ENCODE measurements at regions of chr10 and their contacts with region 1.

Region 1: GRCh38 chr10:99620713-99621453 is 644 bp upstream of the SLC25A28 start:
- DNase-seq: peak; percentile 95 to 97
- H3K4me3 ChIP-seq: peak overlapping the region; percentile 70 to 93
- H3K27ac ChIP-seq: peak overlapping the region; percentile 92 to 98
- H3K4me1 ChIP-seq: peaks cover 0 to 45% (median 29%) of the 10 kb centered on the region in 4 donors
- H3K27me3 ChIP-seq: no peaks in the 10 kb centered on the region
- CTCF ChIP-seq: peak; percentile 12 to 22

Region 2: GRCh38 chr10:99430451-99431189 is 190.3 kb before region 1 on chr10 and contains the start of gene GOT1:
- intact Hi-C with region 1: loop called (anchors 2 kb)
- DNase-seq: peak; percentile 96 to 98
- H3K4me3 ChIP-seq: peak within 1 kb of the TSS; percentile 87 to 92
- H3K27ac ChIP-seq: peak within 1 kb of the TSS; percentile 85 to 90
- H3K4me1 ChIP-seq: peaks cover 0 to 25% (median 16%) of the 10 kb centered on the region in 4 donors
- H3K27me3 ChIP-seq: no peaks in the 10 kb centered on the region
- CTCF ChIP-seq: no peak

Region 3: DNA sequence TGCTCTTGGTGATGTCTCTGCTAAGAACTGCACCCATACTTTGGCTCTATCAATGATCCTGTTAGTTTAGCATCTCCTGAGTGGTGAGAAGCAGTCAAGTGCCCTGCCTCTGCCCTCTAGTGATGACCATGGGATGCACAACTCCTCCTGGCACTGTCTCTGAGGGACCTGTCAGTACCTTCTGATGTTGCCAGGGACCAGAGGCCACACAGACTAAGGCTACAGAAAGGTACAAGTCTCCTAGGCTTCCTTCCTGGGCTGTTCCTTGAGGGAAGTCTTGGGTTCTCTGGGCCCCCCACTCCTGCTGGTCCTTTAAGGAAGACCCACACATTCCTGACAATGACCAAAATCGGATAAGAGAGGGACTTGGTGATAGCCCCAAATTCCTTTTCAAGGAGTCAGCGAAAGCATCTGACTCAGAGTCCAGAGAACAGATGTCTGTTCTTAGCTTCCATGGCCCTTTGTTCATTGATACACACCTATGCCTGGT is 72.8 kb before region 1 on chr10:
- intact Hi-C with region 1: no loop called
- DNase-seq: no peak
- H3K4me3 ChIP-seq: no peak overlapping the region
- H3K27ac ChIP-seq: no peak overlapping the region
- H3K4me1 ChIP-seq: no peaks in the 10 kb centered on the region
- H3K27me3 ChIP-seq: peaks cover 0 to 50% of the 10 kb centered on the region in 2 donors
- CTCF ChIP-seq: no peak

Region 4: GRCh38 chr10:99732033-99732912 is 111.4 kb after region 1 on chr10 and contains the starts of genes COX15 and CUTC:
- intact Hi-C with region 1: loop called (anchors 5 kb)
- DNase-seq: peak; percentile 95 to 99
- H3K4me3 ChIP-seq: peak within 1 kb of the TSS; percentile 91 to 92
- H3K27ac ChIP-seq: peak within 1 kb of the TSS; percentile 92 to 95
- H3K4me1 ChIP-seq: peaks cover 0 to 29% (median 19%) of the 10 kb centered on the region in 4 donors
- H3K27me3 ChIP-seq: no peaks in the 10 kb centered on the region
- CTCF ChIP-seq: peak; percentile 7 to 45

Region 5: DNA sequence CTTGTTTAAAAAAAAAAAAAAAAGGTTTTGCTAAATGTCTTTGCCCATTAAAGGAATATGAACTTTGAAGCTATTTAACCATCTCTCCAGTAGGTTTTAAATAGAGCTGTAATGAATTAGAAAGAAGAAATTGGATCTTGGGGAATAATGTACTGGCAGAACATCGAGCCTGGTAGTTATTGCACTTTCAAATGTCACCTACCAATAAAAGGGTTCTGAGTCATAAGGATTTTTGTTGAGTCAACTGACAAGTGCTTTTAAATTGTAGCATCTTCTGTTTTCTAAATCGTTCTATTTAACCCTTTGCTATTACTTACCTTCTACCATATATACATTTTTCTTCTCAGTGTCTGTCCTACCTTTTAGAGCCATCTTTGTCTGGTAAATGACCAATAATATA is 121.8 kb after region 1 on chr10:
- intact Hi-C with region 1: no loop called
- DNase-seq: no peak
- H3K4me3 ChIP-seq: no peak overlapping the region
- H3K27ac ChIP-seq: peak overlapping the region; percentile 14 to 41
- H3K4me1 ChIP-seq: peaks cover 0 to 27% (median 7%) of the 10 kb centered on the region in 4 donors
- H3K27me3 ChIP-seq: no peaks in the 10 kb centered on the region
- CTCF ChIP-seq: no peak